Activated CD8-positive, alpha-beta memory T cell treated with anti-CD3 and anti-CD28 coated beads, Interleukin-2, amount 10 ng/mL, durations not matched to agents 7 days and 5 days (primary cell): ENCODE measurements at regions of chr1 and their contacts with region 1.

Region 1: GRCh38 chr1:2561898-2562545 is 5.9 kb downstream of the TNFRSF14 start:
- DNase-seq: no peak
- ATAC-seq: no peak
- H3K4me3 Mint-ChIP-seq: no peak overlapping the region
- H3K27ac Mint-ChIP-seq: no peak overlapping the region
- H3K4me1 Mint-ChIP-seq: peaks cover 15% of the 10 kb centered on the region
- H3K27me3 Mint-ChIP-seq: no peaks in the 10 kb centered on the region

Region 2: GRCh38 chr1:2586154-2587070 is 24.4 kb after region 1 on chr1 and contains the start of gene PRXL2B:
- CTCF ChIA-PET with region 1: interaction called, 68 read pairs
- DNase-seq: peak; percentile 99
- ATAC-seq: peak; percentile 82
- H3K4me3 Mint-ChIP-seq: peak within 1 kb of the TSS; percentile 82
- H3K27ac Mint-ChIP-seq: peak within 1 kb of the TSS; percentile 93
- H3K4me1 Mint-ChIP-seq: peaks cover 35% of the 10 kb centered on the region
- H3K27me3 Mint-ChIP-seq: no peaks in the 10 kb centered on the region
- total RNA-seq, gene PRXL2B: 22.4 to 26.2 TPM